ENCODE measurements at regions of chr10 and their contacts with region 1.

Region 1: DNA sequence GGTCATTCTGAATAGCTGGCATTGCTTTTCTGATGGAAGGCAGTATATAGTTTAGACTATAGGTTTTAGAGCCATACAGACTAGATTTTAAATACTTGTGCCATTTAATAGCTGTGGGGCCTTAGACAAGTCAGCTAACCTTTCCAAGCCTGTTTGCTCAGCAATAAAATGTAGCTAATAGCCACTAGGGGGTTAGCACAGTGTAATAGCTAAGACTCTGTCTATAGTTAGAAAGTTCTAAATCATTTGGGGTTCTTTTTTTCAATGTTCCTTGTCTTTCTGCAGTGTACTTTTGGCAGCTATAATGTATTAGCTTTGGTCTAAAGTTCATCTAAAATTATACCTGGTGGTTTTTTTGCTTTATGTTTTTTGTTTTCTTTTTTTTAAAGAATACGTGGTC is 7.5 kb upstream of the KIFBP start:
- DNase-seq: no peak
- ATAC-seq: no peak
- H3K4me3 ChIP-seq: no peak overlapping the region
- H3K27ac ChIP-seq: no peak overlapping the region
- H3K4me1 ChIP-seq: no peaks in the 10 kb centered on the region
- H3K27me3 ChIP-seq: no peaks in the 10 kb centered on the region
- CTCF ChIP-seq: peak in 1 of 5 experiments; percentile 20
- POLR2A ChIP-seq: no peak

Region 2: GRCh38 chr10:68720793-68721672 is 260.0 kb before region 1 on chr10 and contains the start of gene CCAR1:
- in situ Hi-C with region 1: no loop called
- intact Hi-C with region 1: no loop called
- DNase-seq: peak; percentile 93 to 95
- ATAC-seq: peak; percentile 97 to 98
- H3K4me3 ChIP-seq: peak within 1 kb of the TSS; percentile 88 to 96 (median 90)
- H3K27ac ChIP-seq: peak within 1 kb of the TSS; percentile 94 to 99 (median 96)
- H3K4me1 ChIP-seq: peaks cover 7 to 9% of the 10 kb centered on the region in 2 donors
- H3K27me3 ChIP-seq: no peaks in the 10 kb centered on the region
- CTCF ChIP-seq: no peak
- POLR2A ChIP-seq: peak; percentile 67 to 73
- total RNA-seq, gene CCAR1: 17.8 to 71.3 (median 37.7) TPM

Region 3: GRCh38 chr10:69033256-69033655 is 52.2 kb after region 1 on chr10:
- in situ Hi-C with region 1: no loop called
- intact Hi-C with region 1: loop called (anchors 2 kb)
- DNase-seq: no peak
- ATAC-seq: no peak
- H3K4me3 ChIP-seq: no peak overlapping the region
- H3K27ac ChIP-seq: no peak overlapping the region
- H3K4me1 ChIP-seq: no peaks in the 10 kb centered on the region
- H3K27me3 ChIP-seq: no peaks in the 10 kb centered on the region
- CTCF ChIP-seq: no peak
- POLR2A ChIP-seq: no peak

Measured in gastrocnemius medialis (tissue), 4 donors.